A549 (cell line): ENCODE measurements at regions of chr9 and their contacts with region 1.

Region 1: GRCh38 chr9:34500623-34501267 is 22.0 kb downstream of the ENHO start:
- DNase-seq: peak; percentile 43 to 73
- ATAC-seq: peak; percentile 62 to 84
- H3K4me3 ChIP-seq: no peak overlapping the region
- H3K27ac ChIP-seq: no peak overlapping the region
- H3K4me1 ChIP-seq: peaks cover 6% of the 10 kb centered on the region; the same call in 1 of the 3 replicates
- CTCF ChIP-seq: peak; percentile 93
- EP300 ChIP-seq: no peak
- POLR2A ChIP-seq: no peak
- RAD21 ChIP-seq: peak; percentile 83 to 85

Region 2: DNA sequence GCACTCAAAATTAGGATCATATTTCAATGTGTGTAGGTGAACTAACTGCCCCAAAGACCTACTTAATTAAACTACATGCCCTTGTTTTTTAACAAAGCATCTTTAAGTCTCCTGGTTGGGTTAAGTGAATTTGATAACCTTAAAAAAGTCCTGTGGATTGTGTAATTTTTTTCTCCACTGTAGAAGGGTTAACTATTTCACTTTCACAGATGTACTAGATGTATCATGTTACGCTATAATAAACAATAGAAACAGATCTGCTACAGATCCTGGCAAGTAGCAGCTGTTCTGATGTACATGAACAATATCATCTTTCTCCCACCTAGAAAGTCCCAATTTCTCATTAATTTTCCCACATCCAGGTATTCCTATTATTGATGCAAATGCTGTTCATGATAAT is 190.5 kb before region 1 on chr9:
- CTCF ChIA-PET with region 1: no interaction called
- POLR2A ChIA-PET with region 1: no interaction called
- DNase-seq: no peak
- ATAC-seq: no peak
- H3K4me3 ChIP-seq: no peak overlapping the region
- H3K27ac ChIP-seq: no peak overlapping the region
- H3K4me1 ChIP-seq: peaks cover 7% of the 10 kb centered on the region; the same call in 1 of the 3 replicates
- CTCF ChIP-seq: no peak
- EP300 ChIP-seq: no peak
- POLR2A ChIP-seq: no peak
- RAD21 ChIP-seq: no peak

Region 3: GRCh38 chr9:34328987-34329832 is 171.5 kb before region 1 on chr9 and contains the starts of genes KIF24 and NUDT2:
- CTCF ChIA-PET with region 1: interaction called, 32 read pairs
- POLR2A ChIA-PET with region 1: no interaction called
- DNase-seq: peak; percentile 96 to 100
- ATAC-seq: peak; percentile 94 to 97
- H3K4me3 ChIP-seq: peak within 1 kb of the TSS; percentile 97
- H3K27ac ChIP-seq: peak within 1 kb of the TSS; percentile 92 to 95
- H3K4me1 ChIP-seq: peaks cover 20% of the 10 kb centered on the region
- CTCF ChIP-seq: no peak
- EP300 ChIP-seq: no peak
- POLR2A ChIP-seq: peak; percentile 77
- RAD21 ChIP-seq: no peak
- polyA plus RNA-seq, gene KIF24: 4.3 and 4.4 TPM in 2 replicates
- polyA plus RNA-seq, gene NUDT2: 26.4 and 26.8 TPM in 2 replicates

Region 4: GRCh38 chr9:34413231-34413852 is 87.4 kb before region 1 on chr9:
- CTCF ChIA-PET with region 1: interaction called, 16 read pairs
- POLR2A ChIA-PET with region 1: no interaction called
- DNase-seq: peak; percentile 27 to 49
- ATAC-seq: peak; percentile 39 to 73; a peak in 4 of 6 replicates
- H3K4me3 ChIP-seq: no peak overlapping the region
- H3K27ac ChIP-seq: no peak overlapping the region
- H3K4me1 ChIP-seq: no peaks in the 10 kb centered on the region
- CTCF ChIP-seq: no peak
- EP300 ChIP-seq: no peak
- POLR2A ChIP-seq: no peak
- RAD21 ChIP-seq: no peak

Region 5: DNA sequence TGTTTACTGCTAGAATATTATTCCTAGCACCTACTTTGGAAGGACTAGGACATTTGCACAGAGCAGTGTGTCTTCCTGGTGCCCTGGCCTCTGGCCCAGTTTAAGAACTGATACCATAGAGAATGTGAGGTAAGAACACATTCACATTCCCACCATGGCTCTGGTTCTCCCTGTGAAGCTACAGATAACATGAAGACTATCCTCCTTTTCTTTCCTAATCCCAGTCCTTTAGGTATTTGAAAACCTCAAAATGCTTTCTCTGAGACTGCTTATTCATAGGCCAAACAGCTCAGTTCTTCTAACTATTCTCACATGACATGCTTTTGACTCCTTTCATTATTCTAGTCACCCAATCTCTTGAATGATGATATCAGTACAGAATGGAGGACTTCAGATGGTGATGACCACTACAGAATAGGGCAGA is 54.3 kb before region 1 on chr9:
- CTCF ChIA-PET with region 1: interaction called, 70 read pairs
- POLR2A ChIA-PET with region 1: no interaction called
- DNase-seq: no peak
- ATAC-seq: no peak
- H3K4me3 ChIP-seq: no peak overlapping the region
- H3K27ac ChIP-seq: no peak overlapping the region
- H3K4me1 ChIP-seq: no peaks in the 10 kb centered on the region
- CTCF ChIP-seq: no peak
- EP300 ChIP-seq: no peak
- POLR2A ChIP-seq: no peak
- RAD21 ChIP-seq: no peak

Region 6: DNA sequence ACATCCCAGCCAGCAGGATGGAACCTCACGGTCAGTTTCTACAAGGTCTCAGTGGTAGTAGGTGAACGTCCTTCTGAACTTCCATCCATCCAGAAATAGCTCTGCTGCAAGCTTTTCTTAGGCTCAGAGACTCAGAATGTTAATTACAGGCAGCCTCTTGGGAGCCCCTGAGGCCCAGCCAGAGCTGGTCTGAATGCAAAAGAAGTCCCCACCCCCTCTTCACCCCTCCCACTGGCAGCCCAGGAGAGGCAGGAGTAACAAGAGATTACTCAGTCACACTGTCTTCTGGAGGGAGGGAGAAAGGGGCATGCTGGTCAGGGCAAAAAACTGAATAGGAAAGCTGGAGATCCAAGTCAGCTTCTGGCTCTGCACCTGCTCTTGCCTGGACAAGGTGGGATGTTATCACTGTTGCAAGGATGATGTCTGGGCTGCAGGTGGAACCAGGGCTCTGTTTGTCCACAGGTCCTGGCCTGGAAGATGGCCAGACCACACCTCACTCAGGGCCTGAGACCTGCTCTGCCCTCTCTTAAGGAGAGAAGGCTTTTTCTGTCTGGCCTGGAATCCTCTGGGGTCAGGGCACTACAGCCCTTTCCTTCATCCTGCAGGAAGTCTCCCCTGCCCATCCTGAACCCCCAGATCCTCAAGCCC is 12.9 kb after region 1 on chr9:
- CTCF ChIA-PET with region 1: interaction called, 114 read pairs
- POLR2A ChIA-PET with region 1: no interaction called
- DNase-seq: no peak
- ATAC-seq: no peak
- H3K4me3 ChIP-seq: no peak overlapping the region
- H3K27ac ChIP-seq: no peak overlapping the region
- H3K4me1 ChIP-seq: no peaks in the 10 kb centered on the region
- CTCF ChIP-seq: no peak
- EP300 ChIP-seq: no peak
- POLR2A ChIP-seq: no peak
- RAD21 ChIP-seq: no peak

Region 7: GRCh38 chr9:34546834-34547827 is 46.4 kb after region 1 on chr9:
- CTCF ChIA-PET with region 1: interaction called, 15 read pairs
- POLR2A ChIA-PET with region 1: no interaction called
- DNase-seq: peak; percentile 66 to 78
- ATAC-seq: peak; percentile 83 to 91
- H3K4me3 ChIP-seq: no peak overlapping the region
- H3K27ac ChIP-seq: no peak overlapping the region
- H3K4me1 ChIP-seq: peaks cover 9% of the 10 kb centered on the region; the same call in 1 of the 3 replicates
- CTCF ChIP-seq: peak; percentile 65
- EP300 ChIP-seq: no peak
- POLR2A ChIP-seq: no peak
- RAD21 ChIP-seq: peak; percentile 61 to 72

Region 8: DNA sequence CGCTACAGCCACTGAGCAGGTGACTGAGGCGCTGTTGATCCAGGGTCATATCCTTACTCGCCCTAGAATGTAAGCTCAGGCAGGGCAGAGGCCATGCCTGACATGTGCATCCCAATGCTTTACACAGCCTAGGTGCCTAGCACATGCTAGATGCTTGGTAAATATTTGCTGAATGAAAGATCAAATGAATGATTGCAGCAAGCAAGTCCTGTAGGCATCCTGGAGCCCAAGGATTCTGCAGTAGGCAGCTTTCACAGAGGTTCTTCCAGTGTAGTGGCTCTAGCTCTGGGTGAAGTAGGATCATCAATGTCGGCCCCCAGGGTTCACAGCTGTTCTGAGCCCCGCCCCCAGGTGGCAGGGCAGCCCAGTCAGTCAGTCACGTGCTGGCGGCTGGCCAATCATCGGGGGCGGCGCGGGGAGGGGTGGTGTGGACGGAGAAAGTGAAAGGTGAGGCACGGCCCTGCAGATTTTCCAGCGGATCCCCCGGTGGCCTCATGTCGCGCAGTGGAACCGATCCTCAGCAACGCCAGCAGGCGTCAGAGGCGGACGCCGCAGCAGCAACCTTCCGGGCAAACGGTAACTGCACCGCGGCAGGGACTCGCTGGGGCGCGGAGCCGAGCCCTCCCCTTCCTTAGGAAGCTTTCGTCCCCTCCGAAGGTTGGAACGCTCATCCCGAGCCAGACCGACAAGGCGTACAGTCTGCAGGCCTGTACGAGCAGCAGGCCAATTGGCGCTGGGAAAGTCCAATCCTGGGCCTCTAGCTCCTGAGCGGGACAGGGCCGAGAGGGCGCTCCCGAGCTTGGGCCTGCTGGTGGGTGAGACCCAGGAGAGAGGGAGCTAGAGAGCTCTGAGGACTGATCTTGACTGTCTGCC is 145.7 kb after region 1 on chr9 and contains the start of gene GALT:
- CTCF ChIA-PET with region 1: no interaction called
- POLR2A ChIA-PET with region 1: no interaction called
- DNase-seq: peak; percentile 84 to 97
- ATAC-seq: peak; percentile 86 to 91
- H3K4me3 ChIP-seq: peak within 1 kb of the TSS; percentile 60
- H3K27ac ChIP-seq: peak within 1 kb of the TSS; percentile 80 to 94
- H3K4me1 ChIP-seq: peaks cover 32% of the 10 kb centered on the region
- CTCF ChIP-seq: peak; percentile 58
- EP300 ChIP-seq: no peak
- POLR2A ChIP-seq: peak; percentile 61
- RAD21 ChIP-seq: no peak
- polyA plus RNA-seq, gene GALT: 19.0 and 24.4 TPM in 2 replicates